Mammary epithelial cell (primary cell): ENCODE measurements at regions of chr9 and their contacts with region 1.

Region 1: GRCh38 chr9:1009101-1009707 is 32.7 kb downstream of the DMRT3 start:
- DNase-seq: peak; percentile 69
- H3K4me3 ChIP-seq: no peak overlapping the region
- H3K27ac ChIP-seq: no peak overlapping the region
- H3K4me1 ChIP-seq: peaks cover 6% of the 10 kb centered on the region
- H3K27me3 ChIP-seq: no peaks in the 10 kb centered on the region
- CTCF ChIP-seq: peak; percentile 98 to 99

Region 2: DNA sequence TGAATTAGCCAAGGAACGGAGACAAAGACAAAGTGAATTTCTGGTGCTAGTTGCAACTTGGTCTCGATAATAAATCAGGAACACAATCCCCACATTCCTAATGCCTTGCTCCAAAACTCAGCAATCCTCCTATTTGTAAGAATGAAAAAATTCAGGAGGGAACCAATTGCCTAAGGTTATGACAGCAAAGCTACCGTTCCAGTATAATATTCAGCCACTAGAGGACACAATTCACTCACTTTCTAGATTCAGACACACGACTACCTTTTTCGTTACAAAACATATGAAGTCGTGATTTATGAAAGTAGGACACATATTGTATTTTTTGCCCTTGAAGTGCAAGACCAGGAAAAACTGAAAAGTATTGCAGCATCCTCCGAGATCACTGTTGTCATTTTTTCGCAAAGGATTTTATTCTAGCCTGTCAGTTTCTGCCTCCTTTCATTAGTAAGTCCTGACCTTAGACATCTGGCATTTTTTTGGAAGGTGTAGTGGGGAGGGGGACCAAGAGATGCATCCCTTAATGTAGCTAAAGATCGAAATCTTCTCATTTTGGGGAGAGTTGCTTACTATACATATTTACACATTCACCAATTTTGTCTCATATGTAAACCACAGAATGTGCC is 661.4 kb before region 1 on chr9:
- CTCF ChIA-PET with region 1: no interaction called
- dilution Hi-C with region 1: no loop called
- in situ Hi-C with region 1: no loop called
- intact Hi-C with region 1: loop called (anchors 1 kb)
- DNase-seq: peak; percentile 51
- H3K4me3 ChIP-seq: no peak overlapping the region
- H3K27ac ChIP-seq: no peak overlapping the region
- H3K4me1 ChIP-seq: peaks cover 7% of the 10 kb centered on the region
- H3K27me3 ChIP-seq: no peaks in the 10 kb centered on the region
- CTCF ChIP-seq: peak; percentile 87 to 98

Region 3: GRCh38 chr9:763692-764524 is 245.3 kb before region 1 on chr9:
- CTCF ChIA-PET with region 1: no interaction called
- dilution Hi-C with region 1: no loop called
- in situ Hi-C with region 1: no loop called
- intact Hi-C with region 1: loop called (anchors 2 kb)
- DNase-seq: peak; percentile 74
- H3K4me3 ChIP-seq: peak overlapping the region in 1 of 3 experiments; percentile 26
- H3K27ac ChIP-seq: no peak overlapping the region
- H3K4me1 ChIP-seq: peaks cover 7% of the 10 kb centered on the region
- H3K27me3 ChIP-seq: peaks cover 2% of the 10 kb centered on the region
- CTCF ChIP-seq: peak; percentile 98 to 99

Region 4: GRCh38 chr9:893843-894420 is 115.3 kb before region 1 on chr9:
- CTCF ChIA-PET with region 1: interaction called, 4 read pairs
- dilution Hi-C with region 1: no loop called
- in situ Hi-C with region 1: loop called (anchors 5 kb)
- intact Hi-C with region 1: loop called (anchors 1 kb)
- DNase-seq: peak; percentile 54
- H3K4me3 ChIP-seq: no peak overlapping the region
- H3K27ac ChIP-seq: no peak overlapping the region
- H3K4me1 ChIP-seq: no peaks in the 10 kb centered on the region
- H3K27me3 ChIP-seq: no peaks in the 10 kb centered on the region
- CTCF ChIP-seq: peak; percentile 81 to 86

Region 5: GRCh38 chr9:1604942-1605560 is 595.8 kb after region 1 on chr9:
- CTCF ChIA-PET with region 1: no interaction called
- dilution Hi-C with region 1: no loop called
- in situ Hi-C with region 1: no loop called
- intact Hi-C with region 1: loop called (anchors 5 kb)
- DNase-seq: peak; percentile 8
- H3K4me3 ChIP-seq: no peak overlapping the region
- H3K27ac ChIP-seq: no peak overlapping the region
- H3K4me1 ChIP-seq: no peaks in the 10 kb centered on the region
- H3K27me3 ChIP-seq: no peaks in the 10 kb centered on the region
- CTCF ChIP-seq: peak; percentile 39 to 62